GM12878 (cell line): ENCODE measurements at regions of chr17 and their contacts with region 1.

Region 1: GRCh38 chr17:66715745-66716156 is 119.2 kb upstream of the CACNG5 start:
- DNase-seq: peak; percentile 53
- ATAC-seq: peak; percentile 34
- H3K4me3 ChIP-seq: no peak overlapping the region
- H3K27ac ChIP-seq: no peak overlapping the region
- H3K4me1 ChIP-seq: peaks cover 26% of the 10 kb centered on the region
- H3K27me3 ChIP-seq: no peaks in the 10 kb centered on the region
- CTCF ChIP-seq: peak; percentile 61 to 87 (median 84)
- EP300 ChIP-seq: no peak
- POLR2A ChIP-seq: no peak
- RAD21 ChIP-seq: peak; percentile 89

Region 2: DNA sequence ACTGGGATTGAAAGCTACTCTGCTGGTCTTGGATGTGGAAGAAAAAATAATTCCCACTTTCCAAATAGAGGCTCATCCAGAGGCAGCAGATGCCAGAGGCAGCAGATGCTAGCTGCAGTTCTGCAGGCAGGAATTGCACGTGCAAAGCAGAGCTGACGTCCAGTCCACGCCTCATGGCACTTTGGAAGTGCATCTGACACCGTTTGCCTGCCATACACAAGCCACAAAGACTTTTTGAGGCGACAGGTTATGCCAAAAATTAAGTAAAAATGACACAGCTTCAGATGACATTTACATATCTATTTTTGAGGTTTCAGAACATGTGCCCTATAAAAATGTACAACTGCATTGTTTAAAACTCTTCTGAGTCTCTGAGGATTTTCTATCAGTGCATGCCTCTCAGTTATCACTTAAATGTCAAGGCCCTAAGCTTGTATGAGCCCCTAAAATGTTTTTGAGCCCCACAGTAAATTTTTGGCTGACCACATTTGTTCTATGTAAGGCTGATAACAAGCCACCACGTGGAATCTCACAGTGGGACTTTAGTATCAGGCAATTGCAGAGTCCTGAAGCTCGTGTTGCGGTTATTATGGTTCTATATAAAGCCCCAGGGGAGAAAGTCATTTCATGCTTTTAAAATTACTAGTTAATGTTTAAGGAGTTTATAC is 174.2 kb before region 1 on chr17:
- CTCF ChIA-PET with region 1: interaction called, 8 read pairs
- POLR2A ChIA-PET with region 1: no interaction called
- RAD21 ChIA-PET with region 1: interaction called, 21 read pairs
- SMC1A ChIA-PET with region 1: interaction called, 5 read pairs
- in situ Hi-C with region 1: no loop called
- intact Hi-C with region 1: loop called (anchors 5 kb)
- DNase-seq: peak; percentile 40
- ATAC-seq: peak; percentile 83
- H3K4me3 ChIP-seq: 0 out of 2 replicates have a peak overlapping the region, but pooled peaks have one; percentile 14
- H3K27ac ChIP-seq: peak overlapping the region; percentile 58; the same call in 1 of the 2 replicates
- H3K4me1 ChIP-seq: peaks cover 9% of the 10 kb centered on the region
- H3K27me3 ChIP-seq: no peaks in the 10 kb centered on the region
- CTCF ChIP-seq: no peak
- EP300 ChIP-seq: peak; percentile 12 to 55; a peak in 2 of 4 replicates
- POLR2A ChIP-seq: no peak
- RAD21 ChIP-seq: no peak

Region 3: DNA sequence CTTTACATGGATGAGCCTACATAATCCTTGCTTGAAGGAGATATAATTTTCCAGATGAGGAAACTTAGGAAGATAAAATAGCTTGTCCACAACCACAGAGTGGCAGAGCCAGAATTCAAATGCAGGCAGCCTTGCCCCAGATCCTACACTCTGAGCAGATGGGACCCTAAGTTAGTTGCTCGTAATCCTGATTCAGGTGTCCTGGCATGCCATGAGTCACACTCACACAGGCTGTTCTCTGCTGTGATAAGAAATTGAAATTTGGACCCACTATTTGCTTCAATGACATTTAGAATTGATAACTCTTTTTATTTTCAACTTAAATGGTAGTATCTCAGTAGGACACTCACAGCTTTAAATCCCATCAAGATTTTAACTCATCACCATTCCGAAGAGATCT is 31.5 kb before region 1 on chr17:
- CTCF ChIA-PET with region 1: interaction called, 7 read pairs
- POLR2A ChIA-PET with region 1: interaction called, 4 read pairs
- RAD21 ChIA-PET with region 1: interaction called, 5 read pairs
- SMC1A ChIA-PET with region 1: interaction called, 5 read pairs
- in situ Hi-C with region 1: no loop called
- intact Hi-C with region 1: loop called (anchors 2 kb)
- DNase-seq: no peak
- ATAC-seq: no peak
- H3K4me3 ChIP-seq: no peak overlapping the region
- H3K27ac ChIP-seq: no peak overlapping the region
- H3K4me1 ChIP-seq: no peaks in the 10 kb centered on the region
- H3K27me3 ChIP-seq: no peaks in the 10 kb centered on the region
- CTCF ChIP-seq: no peak
- EP300 ChIP-seq: no peak
- POLR2A ChIP-seq: no peak
- RAD21 ChIP-seq: no peak

Region 4: GRCh38 chr17:66841328-66841727 is 125.6 kb after region 1 on chr17:
- CTCF ChIA-PET with region 1: no interaction called
- POLR2A ChIA-PET with region 1: no interaction called
- RAD21 ChIA-PET with region 1: no interaction called
- SMC1A ChIA-PET with region 1: no interaction called
- in situ Hi-C with region 1: no loop called
- intact Hi-C with region 1: no loop called
- DNase-seq: no peak
- ATAC-seq: no peak
- H3K4me3 ChIP-seq: no peak overlapping the region
- H3K27ac ChIP-seq: no peak overlapping the region
- H3K4me1 ChIP-seq: no peaks in the 10 kb centered on the region
- H3K27me3 ChIP-seq: no peaks in the 10 kb centered on the region
- CTCF ChIP-seq: no peak
- EP300 ChIP-seq: no peak
- POLR2A ChIP-seq: no peak
- RAD21 ChIP-seq: no peak

Region 5: DNA sequence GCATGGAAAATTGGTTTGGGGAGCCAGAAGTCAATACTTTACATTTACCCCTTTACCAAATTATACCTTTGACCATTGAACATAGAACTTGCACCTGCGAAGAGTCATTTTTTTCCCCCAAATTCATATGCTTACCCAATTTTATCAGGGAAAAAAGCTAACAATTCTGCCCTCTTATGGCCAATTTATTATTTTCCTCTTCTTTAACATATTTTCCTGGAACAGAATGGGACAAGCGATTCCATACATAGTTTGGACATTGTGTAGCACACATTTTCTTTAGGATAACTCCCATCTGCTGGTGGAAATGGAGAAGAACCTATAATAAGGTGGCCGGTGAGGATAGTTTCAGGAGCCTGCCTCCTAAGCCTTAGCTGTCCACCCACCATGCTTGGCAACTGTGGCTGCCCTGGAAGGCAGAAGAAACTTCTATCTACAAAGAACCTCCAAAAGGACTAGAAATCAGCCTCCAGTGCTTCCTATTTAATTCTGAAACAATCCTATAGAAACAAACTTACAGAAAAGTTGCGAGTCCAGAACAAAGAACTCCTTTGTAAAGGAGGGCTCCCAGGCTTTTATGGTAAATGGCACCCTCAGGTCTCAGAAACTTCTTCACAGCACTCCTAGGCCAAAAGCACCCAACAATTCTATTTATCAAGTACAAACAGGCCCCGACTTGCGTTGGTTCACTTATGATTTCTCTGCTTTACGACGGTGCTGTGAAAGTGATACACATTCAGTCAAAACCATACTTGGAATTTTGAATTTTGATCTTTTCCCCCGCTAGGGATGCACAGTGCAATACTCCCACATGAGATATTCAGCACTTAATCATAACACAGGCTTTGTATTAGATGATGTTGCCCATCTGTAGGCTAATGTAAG is 184.6 kb after region 1 on chr17:
- CTCF ChIA-PET with region 1: interaction called, 25 read pairs
- POLR2A ChIA-PET with region 1: interaction called, 6 read pairs
- RAD21 ChIA-PET with region 1: interaction called, 8 read pairs
- SMC1A ChIA-PET with region 1: interaction called, 13 read pairs
- in situ Hi-C with region 1: loop called (anchors 5 kb)
- intact Hi-C with region 1: no loop called
- DNase-seq: no peak
- ATAC-seq: no peak
- H3K4me3 ChIP-seq: no peak overlapping the region
- H3K27ac ChIP-seq: no peak overlapping the region
- H3K4me1 ChIP-seq: no peaks in the 10 kb centered on the region
- H3K27me3 ChIP-seq: no peaks in the 10 kb centered on the region; a peak in 1 of 4 replicates
- CTCF ChIP-seq: peak in 2 of 3 experiments; percentile 20 to 37; a peak in 2 of 6 replicates
- EP300 ChIP-seq: no peak
- POLR2A ChIP-seq: no peak
- RAD21 ChIP-seq: 0 out of 2 replicates have a peak, but pooled peaks have one; percentile 12

Region 6: GRCh38 chr17:67157732-67158639 is 442.2 kb after region 1 on chr17:
- CTCF ChIA-PET with region 1: interaction called, 4 read pairs
- POLR2A ChIA-PET with region 1: no interaction called
- RAD21 ChIA-PET with region 1: no interaction called
- SMC1A ChIA-PET with region 1: interaction called, 3 read pairs
- in situ Hi-C with region 1: no loop called
- intact Hi-C with region 1: loop called (anchors 1 kb)
- DNase-seq: peak; percentile 2
- ATAC-seq: peak; percentile 72
- H3K4me3 ChIP-seq: no peak overlapping the region
- H3K27ac ChIP-seq: no peak overlapping the region
- H3K4me1 ChIP-seq: no peaks in the 10 kb centered on the region
- H3K27me3 ChIP-seq: no peaks in the 10 kb centered on the region
- CTCF ChIP-seq: peak; percentile 17 to 38 (median 37); a peak in 4 of 6 replicates
- EP300 ChIP-seq: no peak
- POLR2A ChIP-seq: no peak
- RAD21 ChIP-seq: peak; percentile 44

Region 7: DNA sequence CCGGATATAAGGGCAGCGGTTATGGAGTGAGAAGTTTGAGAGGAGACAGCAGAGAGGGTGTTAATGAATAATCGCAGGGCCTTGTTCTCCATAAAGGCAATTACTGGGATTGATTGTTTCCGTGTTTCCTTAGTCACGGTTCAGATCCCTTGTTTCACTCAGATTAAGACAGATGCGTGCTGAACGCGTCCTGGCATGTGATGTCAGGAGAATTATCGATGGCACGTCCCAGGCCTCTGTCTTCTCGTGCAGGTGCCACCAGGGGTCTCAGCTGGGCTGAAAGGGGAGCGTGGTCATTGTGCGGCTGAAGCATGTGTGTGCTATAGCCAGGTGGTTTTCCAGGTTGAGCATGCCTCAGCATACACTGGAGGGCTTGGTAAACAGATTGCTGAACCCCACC is 859.6 kb after region 1 on chr17:
- CTCF ChIA-PET with region 1: no interaction called
- POLR2A ChIA-PET with region 1: no interaction called
- RAD21 ChIA-PET with region 1: no interaction called
- SMC1A ChIA-PET with region 1: no interaction called
- in situ Hi-C with region 1: loop called (anchors 10 kb)
- intact Hi-C with region 1: loop called (anchors 10 kb)
- DNase-seq: peak; percentile 68
- ATAC-seq: peak; percentile 49
- H3K4me3 ChIP-seq: peak overlapping the region; percentile 68; the same call in 1 of the 2 replicates
- H3K27ac ChIP-seq: peak overlapping the region; percentile 88
- H3K4me1 ChIP-seq: peaks cover 83% of the 10 kb centered on the region
- H3K27me3 ChIP-seq: no peaks in the 10 kb centered on the region
- CTCF ChIP-seq: peak; percentile 53 to 60 (median 59)
- EP300 ChIP-seq: 0 out of 4 replicates have a peak, but pooled peaks of 1 of the 2 experiments have one; percentile 28
- POLR2A ChIP-seq: peak; percentile 60
- RAD21 ChIP-seq: peak; percentile 73